ENCODE measurements at regions of chr12 and their contacts with region 1.

Region 1: DNA sequence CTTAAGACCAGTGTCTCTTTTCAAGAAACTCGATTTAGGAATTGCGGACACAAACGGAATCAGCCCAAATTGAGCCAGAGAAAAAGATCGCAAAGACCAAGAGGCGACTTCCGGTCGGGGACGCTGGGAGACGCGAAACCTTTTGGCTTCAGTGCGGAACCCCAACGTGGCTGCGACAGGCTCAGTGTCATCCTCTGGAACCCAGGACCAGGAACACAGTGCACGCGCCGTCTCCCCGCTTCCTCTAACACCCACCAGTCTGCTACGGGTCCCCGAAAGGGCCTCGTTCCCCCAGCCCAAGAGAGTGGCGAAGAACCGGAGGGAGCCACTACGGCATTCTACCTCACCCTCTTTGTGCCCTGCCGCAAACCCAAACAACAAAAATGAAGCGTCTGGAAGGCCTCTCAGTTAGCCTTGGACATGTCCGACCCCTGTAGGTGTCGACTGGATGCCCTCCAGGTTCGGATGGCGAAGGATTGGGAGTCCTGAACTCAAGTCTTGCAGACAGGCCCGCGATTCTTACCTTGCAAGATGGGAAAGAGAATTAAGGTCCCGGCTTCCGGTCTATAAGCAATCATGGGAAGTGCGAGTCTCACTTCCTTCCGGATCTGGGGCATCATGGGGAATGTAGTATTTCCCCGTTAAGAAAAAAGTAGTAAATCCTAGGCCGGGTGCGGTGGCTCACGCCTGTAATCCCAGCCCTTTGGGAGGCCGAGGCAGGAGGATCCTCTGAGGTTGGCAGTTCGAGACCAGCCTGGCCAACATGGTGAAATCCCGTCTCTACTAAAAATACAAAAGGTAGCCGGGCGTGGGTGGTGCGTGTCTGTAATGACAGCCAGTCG is at the start of gene RPL6:
- DNase-seq: peak; percentile 82
- H3K4me3 Mint-ChIP-seq: peak within 1 kb of the TSS; percentile 98
- H3K27ac Mint-ChIP-seq: peak within 1 kb of the TSS; percentile 98
- H3K4me1 Mint-ChIP-seq: peaks cover 44% of the 10 kb centered on the region
- H3K27me3 Mint-ChIP-seq: no peaks in the 10 kb centered on the region
- total RNA-seq, gene RPL6: 911 to 941 TPM

Region 2: GRCh38 chr12:111984820-111985219 is 424.5 kb before region 1 on chr12:
- CTCF ChIA-PET with region 1: no interaction called
- POLR2A ChIA-PET with region 1: no interaction called
- DNase-seq: no peak
- H3K4me3 Mint-ChIP-seq: no peak overlapping the region
- H3K27ac Mint-ChIP-seq: no peak overlapping the region
- H3K4me1 Mint-ChIP-seq: peaks cover 2% of the 10 kb centered on the region
- H3K27me3 Mint-ChIP-seq: no peaks in the 10 kb centered on the region

Region 3: GRCh38 chr12:112198120-112198733 is 211.1 kb before region 1 on chr12:
- CTCF ChIA-PET with region 1: interaction called, 11 read pairs
- POLR2A ChIA-PET with region 1: no interaction called
- DNase-seq: peak; percentile 57
- H3K4me3 Mint-ChIP-seq: no peak overlapping the region
- H3K27ac Mint-ChIP-seq: no peak overlapping the region
- H3K4me1 Mint-ChIP-seq: peaks cover 2% of the 10 kb centered on the region
- H3K27me3 Mint-ChIP-seq: no peaks in the 10 kb centered on the region

Measured in activated CD4-positive, alpha-beta memory T cell treated with anti-CD3 and anti-CD28 coated beads, Interleukin-2, amount 10 ng/mL, durations not matched to agents 7 days and 5 days (primary cell).